Psoas muscle (tissue), 8 donors: ENCODE measurements at regions of chr17 and their contacts with region 1.

Region 1: GRCh38 chr17:57892146-57892828 is 42.4 kb upstream of the MRPS23 start:
- DNase-seq: peak; percentile 90 to 94
- ATAC-seq: peak; percentile 50 to 59 (median 52)
- H3K4me3 ChIP-seq: peak overlapping the region; percentile 58
- H3K27ac ChIP-seq: peak overlapping the region; percentile 97
- H3K4me1 ChIP-seq: peaks cover 83% of the 10 kb centered on the region
- H3K27me3 ChIP-seq: no peaks in the 10 kb centered on the region
- CTCF ChIP-seq: peak; percentile 96

Region 2: DNA sequence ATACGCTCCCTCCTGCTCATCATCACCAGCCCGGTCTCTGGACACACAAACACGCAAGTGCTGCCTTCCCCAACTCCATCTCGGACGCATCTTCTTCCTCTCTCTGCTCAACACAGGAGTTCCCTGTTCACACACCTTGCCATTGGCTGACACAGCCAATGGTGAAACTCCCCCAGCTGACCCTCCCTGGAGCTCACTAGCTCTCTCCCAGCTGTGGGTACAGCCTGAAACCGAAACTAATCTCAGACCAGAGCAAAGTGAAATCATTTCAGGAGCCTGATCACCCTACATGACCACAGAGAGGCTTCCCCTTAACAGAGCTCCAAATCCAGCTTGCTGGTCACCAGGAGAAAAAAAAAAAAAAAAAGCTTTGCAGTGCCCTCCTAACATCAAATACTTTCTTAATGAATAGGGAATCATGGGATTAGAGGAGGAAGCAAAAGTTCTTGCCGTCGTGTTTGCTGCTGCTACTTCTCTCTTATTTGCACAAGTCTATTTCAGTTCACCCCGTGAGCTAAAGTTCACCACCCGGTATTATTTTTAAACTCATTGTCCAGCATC is 54.6 kb after region 1 on chr17:
- intact Hi-C with region 1: loop called (anchors 2 to 5 kb)
- DNase-seq: peak in 1 of 2 donors; percentile 63
- ATAC-seq: peak; percentile 15 to 53 (median 42)
- H3K4me3 ChIP-seq: peak overlapping the region; percentile 59
- H3K27ac ChIP-seq: peak overlapping the region; percentile 99
- H3K4me1 ChIP-seq: peaks cover 96% of the 10 kb centered on the region
- H3K27me3 ChIP-seq: no peaks in the 10 kb centered on the region
- CTCF ChIP-seq: no peak

Region 3: GRCh38 chr17:57987580-57988421 is 95.5 kb after region 1 on chr17 and contains the start of gene VEZF1:
- intact Hi-C with region 1: loop called (anchors 1 to 5 kb)
- DNase-seq: peak; percentile 85 to 92
- ATAC-seq: peak; percentile 63 to 72 (median 67)
- H3K4me3 ChIP-seq: peak within 1 kb of the TSS; percentile 86
- H3K27ac ChIP-seq: peak within 1 kb of the TSS; percentile 94
- H3K4me1 ChIP-seq: peaks cover 78% of the 10 kb centered on the region
- H3K27me3 ChIP-seq: no peaks in the 10 kb centered on the region
- CTCF ChIP-seq: no peak
- total RNA-seq, gene VEZF1: 45.7 to 92.5 (median 70.7) TPM

Region 4: GRCh38 chr17:57995076-57995956 is 103.0 kb after region 1 on chr17:
- intact Hi-C with region 1: loop called in 1 of 2 experiments (anchors 2 kb)
- DNase-seq: peak; percentile 61 to 87
- ATAC-seq: peak; percentile 90 to 94 (median 92)
- H3K4me3 ChIP-seq: no peak overlapping the region
- H3K27ac ChIP-seq: peak overlapping the region; percentile 94
- H3K4me1 ChIP-seq: peaks cover 65% of the 10 kb centered on the region
- H3K27me3 ChIP-seq: no peaks in the 10 kb centered on the region
- CTCF ChIP-seq: peak; percentile 71